ENCODE measurements at regions of chr4 and their contacts with region 1.

Region 1: GRCh38 chr4:1899149-1900086 is 28.2 kb downstream of the NSD2 start:
- H3K4me3 Mint-ChIP-seq: no peak overlapping the region
- H3K27ac Mint-ChIP-seq: peak overlapping the region; percentile 21
- H3K4me1 Mint-ChIP-seq: peaks cover 21% of the 10 kb centered on the region
- H3K27me3 Mint-ChIP-seq: no peaks in the 10 kb centered on the region

Region 2: GRCh38 chr4:1746265-1746691 is 153.1 kb before region 1 on chr4:
- intact Hi-C with region 1: loop called (anchors 5 kb)
- H3K4me3 Mint-ChIP-seq: no peak overlapping the region
- H3K27ac Mint-ChIP-seq: no peak overlapping the region
- H3K4me1 Mint-ChIP-seq: peaks cover 6% of the 10 kb centered on the region
- H3K27me3 Mint-ChIP-seq: peaks cover 16% of the 10 kb centered on the region

Region 3: GRCh38 chr4:1834047-1834775 is 65.2 kb before region 1 on chr4:
- intact Hi-C with region 1: loop called (anchors 10 kb)
- H3K4me3 Mint-ChIP-seq: no peak overlapping the region
- H3K27ac Mint-ChIP-seq: no peak overlapping the region
- H3K4me1 Mint-ChIP-seq: peaks cover 7% of the 10 kb centered on the region
- H3K27me3 Mint-ChIP-seq: no peaks in the 10 kb centered on the region

Region 4: GRCh38 chr4:1856042-1856788 is 43.2 kb before region 1 on chr4 and contains the start of gene LETM1:
- intact Hi-C with region 1: loop called (anchors 2 kb)
- H3K4me3 Mint-ChIP-seq: peak within 1 kb of the TSS; percentile 80
- H3K27ac Mint-ChIP-seq: peak within 1 kb of the TSS; percentile 79
- H3K4me1 Mint-ChIP-seq: peaks cover 49% of the 10 kb centered on the region
- H3K27me3 Mint-ChIP-seq: peaks cover 1% of the 10 kb centered on the region

Region 5: GRCh38 chr4:1870578-1871443 is 28.6 kb before region 1 on chr4 and contains the start of gene NSD2:
- intact Hi-C with region 1: loop called (anchors 2 kb)
- H3K4me3 Mint-ChIP-seq: peak within 1 kb of the TSS; percentile 78
- H3K27ac Mint-ChIP-seq: peak within 1 kb of the TSS; percentile 88
- H3K4me1 Mint-ChIP-seq: peaks cover 29% of the 10 kb centered on the region
- H3K27me3 Mint-ChIP-seq: peaks cover 21% of the 10 kb centered on the region